ENCODE measurements at regions of chr22 and their contacts with region 1.

Region 1: DNA sequence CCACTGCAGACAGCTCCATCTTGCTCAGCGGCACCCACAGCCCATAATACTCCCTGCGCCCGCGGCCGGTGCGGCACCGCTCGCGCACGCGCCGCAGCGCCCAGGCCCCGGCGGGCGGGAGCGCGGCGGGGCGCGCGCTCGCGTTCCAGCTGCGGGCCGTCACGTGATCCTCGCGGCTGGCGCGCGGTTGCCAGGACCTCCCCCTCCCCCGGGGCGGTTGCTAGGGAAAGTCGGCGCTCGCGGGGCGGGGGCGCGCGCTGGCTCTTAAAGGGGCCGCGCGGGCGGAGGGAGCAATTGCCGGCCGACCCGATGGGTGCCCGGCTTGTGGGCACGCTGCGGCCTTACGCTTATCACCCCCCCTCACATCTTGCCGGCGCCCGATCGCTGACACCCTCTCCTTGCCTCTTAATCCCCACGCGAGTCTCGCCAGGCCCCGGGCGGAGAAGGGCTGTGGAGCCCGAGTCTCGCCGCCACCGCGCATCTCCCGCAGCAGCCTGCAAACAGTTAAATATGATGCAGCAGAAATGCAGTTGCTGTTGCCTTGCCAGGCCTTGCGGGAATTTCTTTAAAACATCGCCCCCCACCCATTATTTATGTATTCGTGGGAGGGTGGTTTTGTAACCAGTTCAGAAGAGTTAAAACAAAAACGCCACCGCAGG is at the start of gene CBX6:
- DNase-seq: peak; percentile 93 to 99 (median 94)

Region 2: DNA sequence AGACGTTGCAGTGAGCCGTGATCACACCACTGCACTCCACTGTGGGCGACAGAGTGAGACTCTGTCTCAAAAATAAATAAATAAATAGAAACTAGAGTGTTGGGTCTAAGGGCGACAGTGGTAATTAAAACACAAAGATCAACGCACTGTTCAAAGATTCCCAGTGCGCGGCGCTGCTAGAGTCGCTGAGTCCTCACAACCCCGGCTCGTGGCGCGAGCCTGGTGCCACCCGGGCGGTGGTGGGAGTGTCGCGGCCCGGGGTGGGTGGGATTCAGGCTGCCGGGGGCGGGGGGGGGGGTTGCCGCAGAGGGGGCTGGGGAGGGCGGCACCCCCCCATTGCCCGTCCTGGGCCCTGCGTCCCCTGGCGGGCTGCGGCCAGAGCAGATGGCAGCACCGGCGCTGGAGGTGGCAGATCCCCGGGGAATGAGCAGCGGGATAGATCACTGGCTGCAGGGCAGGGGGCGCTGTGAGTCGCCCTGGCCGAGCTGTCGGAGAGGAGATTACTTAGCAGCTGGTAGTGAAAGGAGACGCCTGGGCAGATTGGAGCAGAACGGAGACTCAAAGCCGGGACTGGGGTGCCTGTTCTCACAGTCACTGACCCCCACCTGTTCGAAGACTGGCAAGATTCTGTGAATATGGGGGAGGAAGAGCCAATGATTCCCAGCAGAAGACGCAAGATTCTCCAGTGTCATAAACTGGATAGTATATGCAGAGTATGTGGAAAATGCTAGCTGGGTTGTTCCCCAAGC is 54.9 kb after region 1 on chr22:
- intact Hi-C with region 1: loop called (anchors 2 kb)
- DNase-seq: peak; percentile 67 to 96 (median 78)

Region 3: GRCh38 chr22:39123751-39124601 is 251.7 kb after region 1 on chr22:
- intact Hi-C with region 1: loop called (anchors 2 kb)
- DNase-seq: peak in 1 of 10 donors; percentile 59

Region 4: GRCh38 chr22:39152511-39153219 is 280.4 kb after region 1 on chr22 and contains the start of gene CBX7:
- intact Hi-C with region 1: loop called (anchors 2 kb)
- DNase-seq: peak; percentile 88 to 99 (median 92)